ENCODE measurements at regions of chr18 and their contacts with region 1.

Region 1: DNA sequence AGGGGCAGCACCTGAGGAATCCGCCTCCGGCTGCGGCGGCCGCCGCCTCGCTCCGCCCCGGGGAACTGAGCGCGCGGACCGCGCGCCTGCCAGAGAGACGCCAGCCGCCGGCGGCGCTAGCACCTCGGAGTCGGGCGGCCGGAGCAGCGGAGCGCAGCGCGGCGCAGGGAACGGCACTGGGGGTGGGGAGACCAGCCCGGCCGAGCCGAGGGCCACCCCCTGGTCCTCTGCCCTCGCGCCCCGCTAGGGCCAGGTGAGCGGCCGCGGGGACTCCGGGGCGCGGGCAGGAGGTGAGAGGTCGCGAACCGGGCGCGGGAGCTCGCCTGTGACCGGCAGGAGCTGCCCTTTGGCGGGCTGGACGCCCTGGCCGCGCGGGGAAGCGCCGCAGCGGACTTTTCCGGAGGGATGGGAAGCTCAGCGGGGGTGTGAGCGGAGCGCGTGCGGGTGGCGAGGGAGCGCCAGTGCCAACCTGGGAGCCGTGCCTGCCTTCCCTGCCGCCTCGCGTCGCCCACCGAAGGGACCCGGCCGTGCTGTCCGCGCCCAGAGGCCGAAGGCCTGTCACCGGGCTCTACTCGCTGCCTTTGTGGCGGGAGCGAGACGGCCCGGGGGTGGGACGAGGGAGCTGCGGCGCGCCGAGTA is at the start of gene GREB1L:
- DNase-seq: peak; percentile 47 to 86 (median 81)
- ATAC-seq: peak; percentile 90 to 93
- H3K4me3 ChIP-seq: peak within 1 kb of the TSS; percentile 62
- H3K27ac ChIP-seq: peak within 1 kb of the TSS; percentile 25
- H3K4me1 ChIP-seq: no peaks in the 10 kb centered on the region
- H3K27me3 ChIP-seq: no peaks in the 10 kb centered on the region
- total RNA-seq, gene GREB1L: 17.0 to 31.4 (median 23.9) TPM

Region 2: GRCh38 chr18:21303913-21304312 is 61.7 kb after region 1 on chr18:
- intact Hi-C with region 1: loop called in 1 of 4 experiments (anchors 10 kb)
- DNase-seq: no peak
- ATAC-seq: no peak
- H3K4me3 ChIP-seq: no peak overlapping the region
- H3K27ac ChIP-seq: no peak overlapping the region
- H3K4me1 ChIP-seq: no peaks in the 10 kb centered on the region
- H3K27me3 ChIP-seq: no peaks in the 10 kb centered on the region

Region 3: DNA sequence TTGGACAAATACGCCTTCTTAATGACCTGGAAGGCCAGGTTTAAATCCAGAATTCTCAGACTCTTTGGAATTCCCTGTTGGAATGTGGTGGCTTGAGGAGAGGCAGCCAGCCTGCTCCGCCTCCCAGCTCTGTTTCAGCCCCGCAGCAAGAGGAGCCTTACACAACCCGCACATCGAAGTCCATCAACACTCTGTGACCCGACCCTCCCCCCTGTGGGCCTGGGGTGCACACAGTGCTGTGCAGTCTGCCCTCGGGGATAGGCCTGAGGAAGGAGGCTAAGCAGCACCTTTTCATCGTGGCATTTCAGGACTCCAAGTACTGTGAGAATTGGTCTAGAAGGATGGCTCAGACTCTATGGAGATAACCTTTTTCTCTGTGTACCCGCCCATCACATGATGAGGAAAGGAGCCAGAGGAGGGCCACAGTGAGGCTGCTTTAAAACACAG is 73.5 kb after region 1 on chr18:
- intact Hi-C with region 1: loop called in 1 of 4 experiments (anchors 10 kb)
- DNase-seq: no peak
- ATAC-seq: peak in 1 of 2 donors; percentile 48
- H3K4me3 ChIP-seq: no peak overlapping the region
- H3K27ac ChIP-seq: no peak overlapping the region
- H3K4me1 ChIP-seq: no peaks in the 10 kb centered on the region
- H3K27me3 ChIP-seq: no peaks in the 10 kb centered on the region

Region 4: DNA sequence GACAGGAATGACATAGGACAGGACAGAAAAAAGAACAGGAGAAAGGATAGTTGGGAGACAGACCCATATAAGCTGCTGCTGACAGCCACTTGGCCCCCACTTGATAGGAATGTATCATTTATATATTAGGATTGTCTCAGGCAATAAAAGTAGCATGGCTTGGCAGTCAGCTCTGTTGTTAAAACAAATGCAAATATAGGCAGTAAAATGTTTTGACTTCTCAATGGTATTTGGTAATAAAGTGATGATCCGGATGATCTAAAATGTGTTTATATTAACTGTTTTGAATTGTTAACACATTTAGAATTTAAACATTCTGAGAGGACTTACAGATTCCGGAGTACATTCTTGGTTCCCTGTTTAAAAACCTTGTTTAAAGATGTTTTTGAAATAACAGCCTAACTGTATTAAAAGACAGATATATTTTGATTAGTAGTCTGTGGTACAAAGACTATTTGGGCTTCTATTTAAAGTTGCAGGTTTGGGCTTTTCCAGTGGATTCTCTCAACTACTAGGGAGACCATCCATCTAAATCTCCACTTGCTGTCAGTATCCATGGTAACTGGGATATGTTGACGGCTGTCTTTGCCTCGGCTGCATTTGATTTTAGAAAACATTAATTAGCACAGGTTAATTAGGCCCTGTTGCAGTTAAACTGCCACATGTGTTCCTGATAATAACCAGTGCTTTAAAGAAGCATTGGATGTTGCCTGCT is 210.7 kb after region 1 on chr18:
- intact Hi-C with region 1: loop called in 1 of 4 experiments (anchors 10 kb)
- DNase-seq: no peak
- ATAC-seq: no peak
- H3K4me3 ChIP-seq: no peak overlapping the region
- H3K27ac ChIP-seq: no peak overlapping the region
- H3K4me1 ChIP-seq: peaks cover 5% of the 10 kb centered on the region
- H3K27me3 ChIP-seq: no peaks in the 10 kb centered on the region

Measured in right cardiac atrium (tissue), 5 donors.